Cardiac septum (tissue), 1 donor: ENCODE measurements at regions of chr2 and their contacts with region 1.

Region 1: DNA sequence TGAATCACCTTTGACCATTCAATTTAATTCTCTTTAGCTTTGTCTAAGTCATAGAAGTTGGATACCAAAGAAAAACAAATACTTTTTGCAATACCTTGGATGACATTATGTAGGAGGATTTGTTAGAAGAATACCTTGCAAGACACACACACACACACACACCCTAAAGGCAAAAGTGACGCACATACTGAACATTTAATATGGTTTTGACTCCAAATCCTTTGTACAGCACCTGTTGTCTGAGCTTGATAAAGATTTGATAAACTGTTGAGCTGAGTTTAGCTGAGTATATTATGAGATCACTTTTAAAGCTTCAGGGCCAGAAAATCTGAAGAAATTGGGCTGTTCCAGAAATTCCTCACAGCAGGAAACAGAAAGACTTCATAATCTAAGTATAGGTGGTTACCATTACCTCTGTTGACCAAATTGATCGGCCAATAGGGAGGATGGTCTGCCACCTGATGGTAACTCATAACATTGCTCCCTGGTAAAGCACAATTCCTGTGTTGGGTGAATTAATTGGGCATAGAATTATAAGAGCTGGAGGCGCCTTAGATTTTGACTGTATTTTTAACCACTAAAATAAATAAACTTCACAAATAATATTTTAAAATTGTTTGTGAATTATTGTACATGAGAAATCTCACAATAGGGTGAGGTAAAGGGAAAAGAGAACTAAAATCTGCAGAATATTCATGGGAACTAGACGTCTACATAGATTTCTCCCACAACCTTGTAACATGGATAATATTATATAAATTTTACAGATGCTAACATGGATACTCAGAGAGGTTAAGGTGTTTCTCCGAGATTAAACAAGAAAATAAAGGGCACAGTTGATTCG is 21.9 kb upstream of the RPIA start:
- DNase-seq: no peak

Region 2: DNA sequence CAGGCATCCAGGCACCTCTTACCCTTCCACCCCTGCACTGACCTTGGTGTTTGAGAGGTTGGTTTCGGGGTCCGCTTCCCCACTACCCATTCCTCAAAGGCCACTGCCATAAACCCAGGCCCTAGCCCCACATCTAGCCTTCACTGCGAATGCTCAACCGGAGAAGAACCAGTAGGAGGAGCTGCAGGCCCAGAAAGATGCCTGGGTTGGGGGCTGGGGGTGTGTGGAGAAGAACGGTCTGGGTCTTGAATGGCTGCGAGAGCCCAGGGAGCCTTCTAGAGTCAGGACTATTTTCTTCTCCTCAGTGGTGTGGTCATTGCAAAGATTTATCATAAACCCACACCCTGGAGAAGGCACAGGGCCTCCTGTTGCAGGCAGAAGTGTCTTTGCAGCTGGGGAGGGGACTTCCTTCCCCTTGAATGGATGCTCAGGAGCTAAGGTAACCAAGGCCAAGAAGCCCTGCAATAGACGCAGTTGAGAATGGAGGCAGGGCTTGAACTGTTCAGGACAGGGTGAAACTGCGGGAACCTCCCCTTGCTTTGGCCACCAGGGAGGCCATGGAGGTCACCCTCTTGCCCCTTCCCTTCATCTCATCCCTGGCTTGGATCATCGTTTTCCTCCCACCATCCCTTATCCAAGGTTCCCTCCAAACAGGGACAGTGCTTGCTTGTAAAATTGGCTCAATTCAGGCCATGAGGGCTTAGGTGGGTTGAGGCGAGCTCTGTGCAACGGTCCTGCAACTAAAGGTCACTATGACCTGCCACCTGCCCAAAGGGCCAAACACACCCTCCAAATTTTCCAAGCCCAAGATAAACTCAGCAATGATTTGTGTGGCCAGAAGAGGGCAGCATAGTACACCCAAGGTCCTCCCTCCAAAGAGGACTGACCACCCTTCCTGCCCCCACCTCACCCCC is 478.5 kb before region 1 on chr2:
- intact Hi-C with region 1: loop called (anchors 10 kb)
- DNase-seq: no peak

Region 3: DNA sequence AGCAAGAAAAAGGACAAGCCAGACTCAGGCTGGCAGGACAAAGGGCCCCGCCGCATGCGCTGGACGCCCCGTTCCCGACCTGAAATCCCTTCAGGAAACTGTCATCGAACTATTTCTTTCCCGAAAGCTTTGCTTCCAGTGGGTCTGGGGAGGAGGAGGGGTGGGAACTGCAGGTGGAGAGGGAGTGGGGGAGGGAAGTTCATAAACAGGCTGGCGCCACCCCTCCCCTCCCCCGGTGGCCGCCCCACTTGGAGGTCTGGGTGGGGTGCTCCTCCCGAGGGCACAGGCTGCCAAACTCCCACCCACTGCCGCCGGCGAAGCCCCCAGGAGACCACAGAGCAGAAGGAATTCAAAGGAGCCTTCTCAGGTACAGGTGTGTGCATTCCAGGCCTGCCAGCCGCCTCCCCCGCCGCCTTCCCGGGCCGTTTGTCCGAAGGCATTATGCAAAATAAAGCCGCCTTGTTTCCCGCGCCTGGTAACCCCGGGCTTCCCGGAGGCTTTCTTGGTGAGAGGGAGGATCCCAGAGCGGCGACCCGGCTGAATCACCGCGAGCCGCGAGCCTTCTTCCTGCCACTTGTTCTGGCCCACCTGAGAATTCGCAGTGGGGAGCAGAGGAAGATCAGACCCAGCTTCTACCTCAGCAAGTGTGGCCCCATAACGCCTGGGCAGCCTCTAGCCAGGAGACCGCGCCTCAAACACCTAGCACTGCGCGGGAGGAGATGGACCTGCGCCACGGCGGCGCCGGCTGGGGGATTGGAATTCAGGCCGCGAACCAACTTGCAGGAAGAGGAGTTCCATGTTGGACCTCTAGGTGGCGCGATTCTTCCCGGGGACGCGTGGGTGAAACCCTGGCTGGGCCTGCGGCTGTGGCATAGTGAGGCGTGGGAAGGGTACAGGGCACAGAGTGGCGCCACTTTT is 319.0 kb before region 1 on chr2:
- intact Hi-C with region 1: loop called (anchors 10 kb)
- DNase-seq: peak; percentile 79

Region 4: GRCh38 chr2:88545121-88545520 is 124.5 kb before region 1 on chr2:
- intact Hi-C with region 1: no loop called
- DNase-seq: no peak

Region 5: GRCh38 chr2:88590998-88591613 is 78.5 kb before region 1 on chr2:
- intact Hi-C with region 1: loop called (anchors 1 kb)
- DNase-seq: no peak